ENCODE measurements at regions of chr14 and their contacts with region 1.

Region 1: DNA sequence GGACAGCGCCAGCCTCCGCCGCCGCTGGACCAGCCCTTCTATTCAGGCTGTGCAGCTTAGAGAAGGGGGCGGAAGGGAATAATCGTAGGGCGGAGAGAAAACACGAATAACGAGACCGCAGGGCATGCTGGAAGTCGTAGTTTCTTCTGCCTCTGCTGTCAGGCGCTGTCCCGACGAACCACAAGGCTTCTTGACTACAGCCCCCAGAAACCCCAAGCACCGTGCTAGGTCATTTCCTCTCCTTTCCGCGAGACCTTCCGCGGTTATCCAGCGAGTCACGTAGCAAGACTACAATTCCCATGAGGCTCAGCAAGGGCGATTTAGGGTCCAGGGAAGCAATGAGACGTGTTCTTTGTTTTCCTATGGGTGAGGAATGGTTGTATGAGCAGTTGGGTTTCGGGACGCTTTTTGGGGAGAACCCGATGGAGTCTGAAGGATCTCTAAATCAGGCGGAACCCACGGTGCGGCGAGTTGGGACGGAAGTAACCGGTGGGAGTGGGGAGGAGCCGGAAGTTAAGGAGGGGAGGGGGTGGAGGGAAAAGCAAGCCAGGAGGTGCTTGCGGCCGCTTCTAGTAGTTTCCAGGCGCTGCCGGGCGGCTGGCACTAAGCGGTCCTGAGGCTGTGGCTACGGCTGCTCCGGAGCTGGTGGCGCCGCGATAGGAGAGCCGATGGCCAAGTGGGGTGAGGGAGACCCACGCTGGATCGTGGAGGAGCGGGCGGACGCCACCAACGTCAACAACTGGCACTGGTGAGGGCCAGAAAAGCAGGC is at the starts of genes AHSA1 and VIPAS39:
- DNase-seq: peak; percentile 96
- ATAC-seq: peak; percentile 96
- H3K4me3 Mint-ChIP-seq: peak within 1 kb of the TSS; percentile 88
- H3K27ac Mint-ChIP-seq: peak within 1 kb of the TSS; percentile 100
- H3K4me1 Mint-ChIP-seq: peaks cover 38% of the 10 kb centered on the region
- H3K27me3 Mint-ChIP-seq: no peaks in the 10 kb centered on the region
- total RNA-seq, gene AHSA1: 318 to 348 TPM
- total RNA-seq, gene VIPAS39: 16.4 to 20.1 TPM

Region 2: GRCh38 chr14:76151398-76152339 is 1306.0 kb before region 1 on chr14 and contains the start of gene GPATCH2L:
- CTCF ChIA-PET with region 1: no interaction called
- POLR2A ChIA-PET with region 1: no interaction called
- intact Hi-C with region 1: loop called in 1 of 2 experiments (anchors 5 kb)
- DNase-seq: peak; percentile 98
- ATAC-seq: peak; percentile 92
- H3K4me3 Mint-ChIP-seq: peak within 1 kb of the TSS; percentile 92
- H3K27ac Mint-ChIP-seq: peak within 1 kb of the TSS; percentile 95
- H3K4me1 Mint-ChIP-seq: peaks cover 46% of the 10 kb centered on the region
- H3K27me3 Mint-ChIP-seq: no peaks in the 10 kb centered on the region
- total RNA-seq, gene GPATCH2L: 43.0 to 47.2 TPM

Region 3: DNA sequence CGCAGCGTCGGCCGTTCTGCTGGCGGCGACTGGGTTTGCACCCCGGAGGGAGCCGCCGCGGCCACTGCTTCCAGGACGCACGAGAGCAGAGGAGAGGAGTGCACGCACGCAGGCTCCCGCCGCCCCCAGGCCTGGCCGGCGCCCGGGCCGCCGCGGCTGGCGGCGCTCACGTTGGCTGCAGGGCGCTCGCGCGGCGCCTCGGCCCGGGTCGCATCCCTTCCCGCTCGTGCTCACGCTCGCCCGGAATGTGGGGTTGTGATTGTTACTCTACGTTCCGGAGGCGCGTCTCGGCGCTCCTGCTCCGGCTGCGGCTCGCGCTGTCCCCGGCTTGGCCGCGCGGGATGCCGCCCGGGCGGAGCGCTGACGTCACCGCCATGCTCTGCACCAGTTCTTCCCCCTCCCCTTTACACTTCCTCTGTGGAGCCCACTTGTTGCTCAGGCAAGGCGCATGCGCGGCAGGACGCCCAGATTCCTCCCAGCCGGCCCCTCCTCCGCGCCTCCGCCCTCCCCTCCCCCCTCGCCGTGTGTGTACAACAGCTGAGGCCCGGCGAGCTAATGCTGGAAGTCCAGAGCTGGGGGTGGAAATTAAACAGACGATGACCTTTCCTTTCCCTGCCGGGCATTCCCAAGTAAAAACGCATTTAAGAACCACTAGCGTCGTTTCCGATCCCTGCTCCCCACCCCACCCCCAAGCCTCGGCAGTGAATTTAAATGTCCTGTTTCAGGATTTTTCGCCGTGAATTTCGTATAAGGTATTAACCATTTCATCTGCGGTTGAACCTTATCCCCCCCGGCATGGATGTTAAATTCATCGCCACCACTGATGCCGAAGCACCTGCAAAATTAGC is 429.1 kb before region 1 on chr14 and contains the start of gene IRF2BPL:
- CTCF ChIA-PET with region 1: no interaction called
- POLR2A ChIA-PET with region 1: no interaction called
- intact Hi-C with region 1: loop called in 1 of 2 experiments (anchors 5 kb)
- DNase-seq: peak; percentile 97
- ATAC-seq: peak; percentile 67
- H3K4me3 Mint-ChIP-seq: peak within 1 kb of the TSS; percentile 88
- H3K27ac Mint-ChIP-seq: peak within 1 kb of the TSS; percentile 97
- H3K4me1 Mint-ChIP-seq: peaks cover 54% of the 10 kb centered on the region
- H3K27me3 Mint-ChIP-seq: no peaks in the 10 kb centered on the region
- total RNA-seq, gene IRF2BPL: 34.3 to 40.1 TPM

Region 4: DNA sequence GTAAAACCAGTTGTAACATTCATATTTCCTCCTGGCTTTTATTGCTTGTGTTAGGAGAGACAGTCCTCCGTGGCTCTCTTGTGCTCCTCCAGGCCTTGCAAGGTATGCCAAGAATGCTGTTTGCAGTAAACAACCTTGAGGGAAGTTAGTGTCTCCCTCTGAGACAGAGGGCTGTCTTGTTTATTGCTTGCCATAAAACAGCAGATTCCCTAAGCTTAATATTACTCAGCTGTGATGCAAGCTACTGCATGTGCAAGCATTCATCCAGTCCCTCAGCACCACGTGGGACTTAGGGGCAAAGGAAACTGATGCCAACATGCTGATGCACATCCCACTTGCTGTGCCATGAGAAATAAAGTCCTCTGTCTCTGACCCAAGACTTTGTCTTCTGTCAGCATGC is 143.7 kb before region 1 on chr14:
- CTCF ChIA-PET with region 1: interaction called, 13 read pairs
- POLR2A ChIA-PET with region 1: interaction called, 4 read pairs
- intact Hi-C with region 1: no loop called
- DNase-seq: no peak
- ATAC-seq: no peak
- H3K4me3 Mint-ChIP-seq: no peak overlapping the region
- H3K27ac Mint-ChIP-seq: no peak overlapping the region
- H3K4me1 Mint-ChIP-seq: no peaks in the 10 kb centered on the region
- H3K27me3 Mint-ChIP-seq: no peaks in the 10 kb centered on the region

Region 5: DNA sequence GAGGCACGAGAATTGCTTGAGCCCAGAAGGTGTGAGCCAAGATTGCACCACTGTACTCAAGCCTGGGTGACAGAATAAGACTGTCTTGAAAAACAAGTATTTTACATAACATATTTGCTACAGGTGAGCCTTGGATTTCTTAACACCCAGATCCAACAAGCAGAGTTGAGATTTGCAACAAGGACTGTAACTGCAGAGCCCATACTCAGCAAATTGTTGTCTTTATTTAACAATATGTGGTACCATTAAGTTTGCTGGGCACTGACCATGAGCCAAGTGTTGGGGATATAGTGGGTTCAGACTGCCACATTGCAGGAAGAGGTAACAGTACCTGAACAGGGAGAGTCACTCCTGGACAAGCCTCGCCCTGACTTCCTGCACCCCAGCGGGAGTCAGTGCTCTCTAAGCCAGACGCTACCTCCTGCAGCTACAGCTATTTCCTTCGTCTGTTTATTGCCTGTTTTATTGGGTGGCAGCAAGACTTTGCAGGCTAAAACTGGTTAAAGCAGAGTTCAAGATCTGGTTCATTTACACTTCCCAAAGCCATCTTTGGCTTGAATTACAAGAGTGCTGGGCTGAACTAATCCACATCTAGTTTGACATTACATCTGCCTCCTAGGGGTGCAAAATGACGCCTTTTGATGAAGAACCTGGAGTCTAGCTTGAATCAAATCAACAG is 12.6 kb after region 1 on chr14:
- CTCF ChIA-PET with region 1: interaction called, 10 read pairs
- POLR2A ChIA-PET with region 1: no interaction called
- intact Hi-C with region 1: no loop called
- DNase-seq: no peak
- ATAC-seq: no peak
- H3K4me3 Mint-ChIP-seq: no peak overlapping the region
- H3K27ac Mint-ChIP-seq: no peak overlapping the region
- H3K4me1 Mint-ChIP-seq: no peaks in the 10 kb centered on the region
- H3K27me3 Mint-ChIP-seq: no peaks in the 10 kb centered on the region

Region 6: DNA sequence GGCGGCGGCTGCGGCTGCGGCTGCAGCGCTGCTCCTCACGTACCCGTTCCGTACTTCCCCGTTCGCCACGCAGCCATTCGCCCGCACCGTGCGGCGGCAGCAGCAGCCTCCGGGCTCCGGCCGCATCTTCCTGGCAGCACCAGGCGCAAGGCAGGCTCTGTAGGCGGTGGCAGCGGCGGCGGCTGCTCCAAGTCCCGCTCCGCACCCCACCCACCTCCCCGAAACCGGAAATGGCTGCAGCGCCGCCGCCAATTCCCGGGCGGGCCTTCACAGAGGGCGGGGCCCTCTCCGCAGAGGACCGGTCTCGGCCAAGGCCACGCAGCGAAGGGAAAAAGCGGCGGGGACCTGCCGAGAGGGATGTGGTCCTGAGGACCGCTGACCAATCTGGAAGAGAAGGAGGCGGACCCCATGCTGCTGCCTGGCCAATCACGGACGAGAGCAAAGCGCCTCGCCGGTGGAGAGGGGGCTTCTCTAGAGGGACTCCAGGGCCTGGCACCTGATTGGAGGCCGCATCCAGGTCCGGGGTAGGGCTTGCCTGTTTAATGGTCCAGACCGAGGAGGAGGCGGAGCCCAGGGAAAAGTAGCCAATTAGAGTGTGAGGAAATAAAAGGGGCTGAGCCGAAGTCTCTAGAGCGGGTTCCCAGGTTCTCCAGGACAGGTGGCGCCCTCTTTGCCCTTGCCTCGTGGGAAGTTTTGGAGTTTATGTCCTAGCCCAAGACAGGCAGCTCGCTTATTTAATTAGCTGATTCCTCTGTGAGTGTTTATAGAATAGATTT is 158.9 kb after region 1 on chr14 and contains the start of gene SPTLC2:
- CTCF ChIA-PET with region 1: no interaction called
- POLR2A ChIA-PET with region 1: no interaction called
- intact Hi-C with region 1: loop called (anchors 1 to 2 kb)
- DNase-seq: peak; percentile 97
- ATAC-seq: peak; percentile 98
- H3K4me3 Mint-ChIP-seq: peak within 1 kb of the TSS; percentile 92
- H3K27ac Mint-ChIP-seq: peak within 1 kb of the TSS; percentile 91
- H3K4me1 Mint-ChIP-seq: peaks cover 28% of the 10 kb centered on the region
- H3K27me3 Mint-ChIP-seq: no peaks in the 10 kb centered on the region
- total RNA-seq, gene SPTLC2: 16.8 to 24.6 TPM

Region 7: GRCh38 chr14:77760381-77761246 is 302.9 kb after region 1 on chr14 and contains the start of gene SNW1:
- CTCF ChIA-PET with region 1: interaction called, 3 read pairs
- POLR2A ChIA-PET with region 1: interaction called, 4 read pairs
- intact Hi-C with region 1: loop called (anchors 1 kb)
- DNase-seq: peak; percentile 95
- ATAC-seq: peak; percentile 96
- H3K4me3 Mint-ChIP-seq: peak within 1 kb of the TSS; percentile 96
- H3K27ac Mint-ChIP-seq: peak within 1 kb of the TSS; percentile 98
- H3K4me1 Mint-ChIP-seq: peaks cover 33% of the 10 kb centered on the region
- H3K27me3 Mint-ChIP-seq: no peaks in the 10 kb centered on the region
- total RNA-seq, gene SNW1: 134 to 135 TPM

Measured in activated CD4-positive, alpha-beta T cell treated with anti-CD3 and anti-CD28 coated beads for 36 hours (primary cell).